PC-3 (cell line): ENCODE measurements at regions of chr10 and their contacts with region 1.

Region 1: GRCh38 chr10:29735596-29736318 is 101.0 kb upstream of the SVIL start:
- DNase-seq: peak; percentile 89
- ATAC-seq: peak; percentile 79
- H3K4me3 ChIP-seq: peak overlapping the region; percentile 81
- H3K27ac ChIP-seq: peak overlapping the region; percentile 69
- H3K4me1 ChIP-seq: peaks cover 13% of the 10 kb centered on the region; the same call in 1 of the 2 replicates
- H3K27me3 ChIP-seq: no peaks in the 10 kb centered on the region
- CTCF ChIP-seq: peak; percentile 71

Region 2: GRCh38 chr10:29535012-29535777 is 200.6 kb before region 1 on chr10:
- CTCF ChIA-PET with region 1: no interaction called
- POLR2A ChIA-PET with region 1: no interaction called
- intact Hi-C with region 1: loop called (anchors 2 kb)
- DNase-seq: peak; percentile 90
- ATAC-seq: peak; percentile 89
- H3K4me3 ChIP-seq: peak overlapping the region; percentile 43; the same call in 1 of the 2 replicates
- H3K27ac ChIP-seq: peak overlapping the region; percentile 96
- H3K4me1 ChIP-seq: peaks cover 43% of the 10 kb centered on the region
- H3K27me3 ChIP-seq: no peaks in the 10 kb centered on the region
- CTCF ChIP-seq: peak; percentile 90

Region 3: DNA sequence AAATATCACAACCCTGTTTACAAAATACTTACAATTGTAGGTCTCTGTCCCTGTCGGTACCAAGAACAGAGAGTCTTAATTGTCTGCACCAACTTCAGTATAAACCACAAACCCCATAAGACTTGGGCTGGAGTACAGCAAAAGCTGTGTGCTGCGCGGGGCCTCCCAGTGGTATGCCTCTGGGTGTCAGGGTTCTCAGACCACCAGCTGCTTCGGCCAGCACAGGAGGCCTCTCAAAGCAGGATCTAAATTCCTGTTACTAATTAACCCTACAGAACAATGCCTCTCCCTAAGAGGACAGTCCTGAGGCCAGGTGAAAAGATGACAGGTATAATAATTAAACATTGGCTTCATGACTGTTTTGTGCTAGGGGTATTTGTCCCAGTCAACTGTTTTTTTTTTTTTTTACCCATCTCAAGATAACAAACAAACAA is 100.0 kb before region 1 on chr10:
- CTCF ChIA-PET with region 1: no interaction called
- POLR2A ChIA-PET with region 1: interaction called, 20 read pairs
- intact Hi-C with region 1: loop called (anchors 5 kb)
- DNase-seq: no peak
- ATAC-seq: peak; percentile 25
- H3K4me3 ChIP-seq: peak overlapping the region; percentile 32; the same call in 1 of the 2 replicates
- H3K27ac ChIP-seq: peak overlapping the region; percentile 99
- H3K4me1 ChIP-seq: peaks cover 54% of the 10 kb centered on the region
- H3K27me3 ChIP-seq: no peaks in the 10 kb centered on the region
- CTCF ChIP-seq: no peak

Region 4: GRCh38 chr10:29646238-29646902 is 89.4 kb before region 1 on chr10:
- CTCF ChIA-PET with region 1: no interaction called
- POLR2A ChIA-PET with region 1: no interaction called
- intact Hi-C with region 1: no loop called
- DNase-seq: peak; percentile 57
- ATAC-seq: peak; percentile 65
- H3K4me3 ChIP-seq: no peak overlapping the region
- H3K27ac ChIP-seq: peak overlapping the region; percentile 60
- H3K4me1 ChIP-seq: peaks cover 37% of the 10 kb centered on the region
- H3K27me3 ChIP-seq: no peaks in the 10 kb centered on the region
- CTCF ChIP-seq: no peak

Region 5: GRCh38 chr10:29714096-29714874 is 21.5 kb before region 1 on chr10:
- CTCF ChIA-PET with region 1: no interaction called
- POLR2A ChIA-PET with region 1: no interaction called
- intact Hi-C with region 1: loop called (anchors 2 kb)
- DNase-seq: peak; percentile 80
- ATAC-seq: peak; percentile 84
- H3K4me3 ChIP-seq: no peak overlapping the region
- H3K27ac ChIP-seq: peak overlapping the region; percentile 64
- H3K4me1 ChIP-seq: peaks cover 36% of the 10 kb centered on the region
- H3K27me3 ChIP-seq: no peaks in the 10 kb centered on the region
- CTCF ChIP-seq: no peak

Region 6: DNA sequence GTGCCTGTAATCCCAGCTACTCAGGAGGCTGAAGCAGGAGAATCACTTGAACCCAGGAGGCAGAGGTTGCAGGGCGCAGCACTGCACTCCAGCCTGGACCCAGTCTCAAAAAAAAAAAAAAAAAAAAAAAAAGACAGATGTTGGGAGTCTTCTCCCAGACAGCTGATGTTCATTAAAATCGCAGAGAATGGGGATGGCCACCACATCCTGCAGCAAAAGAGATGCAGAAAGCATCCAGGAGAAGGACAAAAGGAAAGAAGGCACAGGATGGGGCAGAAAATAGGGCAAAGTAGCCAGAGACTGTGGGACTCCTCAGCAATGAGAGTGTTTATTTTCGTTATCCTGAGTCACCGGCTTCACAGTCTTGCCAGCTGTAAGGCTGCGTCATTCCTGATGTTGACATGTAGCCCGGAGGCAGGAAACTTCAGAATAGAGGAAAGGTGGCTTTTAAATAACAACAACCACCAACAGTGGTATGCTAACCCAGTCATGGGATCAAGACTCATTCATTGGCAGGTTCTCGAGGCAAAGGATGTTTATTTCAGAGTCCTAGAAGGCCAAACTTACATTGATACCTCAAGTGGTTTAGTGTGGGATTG is 48.5 kb after region 1 on chr10:
- CTCF ChIA-PET with region 1: no interaction called
- POLR2A ChIA-PET with region 1: no interaction called
- intact Hi-C with region 1: loop called (anchors 1 kb)
- DNase-seq: peak; percentile 98
- ATAC-seq: peak; percentile 97
- H3K4me3 ChIP-seq: no peak overlapping the region
- H3K27ac ChIP-seq: peak overlapping the region; percentile 90
- H3K4me1 ChIP-seq: peaks cover 15% of the 10 kb centered on the region
- H3K27me3 ChIP-seq: no peaks in the 10 kb centered on the region
- CTCF ChIP-seq: no peak

Region 7: DNA sequence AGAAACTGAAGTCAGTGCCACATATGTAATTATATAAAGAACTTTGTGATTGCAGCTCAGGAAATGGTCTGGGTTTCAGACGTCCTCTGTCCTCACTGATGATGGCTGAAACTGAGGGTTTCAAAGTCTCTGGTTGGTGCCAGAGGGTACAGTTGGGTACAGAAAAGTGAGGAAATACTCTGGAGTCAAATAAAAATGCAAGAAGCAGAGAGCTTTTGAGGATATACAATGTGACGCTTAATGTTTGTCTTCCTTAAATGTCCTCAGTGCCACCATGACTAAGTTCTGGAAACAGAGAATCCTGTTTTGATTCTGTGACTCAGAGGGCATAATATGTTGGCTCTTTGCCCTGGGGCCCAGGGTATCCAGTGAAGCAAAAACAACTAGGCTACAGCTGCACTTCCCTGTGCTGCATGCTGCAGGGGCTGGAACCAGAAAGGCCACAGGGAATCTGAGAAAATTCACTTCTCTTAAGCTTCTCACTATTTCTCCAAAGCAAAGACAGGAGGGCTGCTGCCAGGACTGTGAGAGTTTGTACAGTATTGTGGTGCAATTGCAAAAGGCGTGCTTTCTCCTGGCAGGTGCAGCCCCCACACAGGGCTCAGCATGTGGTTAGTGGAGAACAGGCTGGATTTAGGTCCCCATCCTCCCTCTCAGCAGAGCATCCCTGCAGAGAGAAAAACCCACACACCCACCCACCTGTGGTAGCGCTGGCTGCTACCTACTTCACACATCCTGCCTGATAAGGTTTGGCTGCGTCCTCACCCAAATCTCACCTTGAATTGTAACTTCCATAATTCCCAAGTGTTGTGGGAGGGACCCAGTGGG is 68.5 kb after region 1 on chr10:
- CTCF ChIA-PET with region 1: no interaction called
- POLR2A ChIA-PET with region 1: no interaction called
- intact Hi-C with region 1: loop called (anchors 5 kb)
- DNase-seq: peak; percentile 97
- ATAC-seq: peak; percentile 79
- H3K4me3 ChIP-seq: peak overlapping the region; percentile 49; the same call in 1 of the 2 replicates
- H3K27ac ChIP-seq: peak overlapping the region; percentile 100
- H3K4me1 ChIP-seq: peaks cover 50% of the 10 kb centered on the region
- H3K27me3 ChIP-seq: no peaks in the 10 kb centered on the region
- CTCF ChIP-seq: no peak

Region 8: GRCh38 chr10:29857843-29858701 is 122.3 kb after region 1 on chr10:
- CTCF ChIA-PET with region 1: no interaction called
- POLR2A ChIA-PET with region 1: no interaction called
- intact Hi-C with region 1: loop called (anchors 1 kb)
- DNase-seq: peak; percentile 81
- ATAC-seq: peak; percentile 57
- H3K4me3 ChIP-seq: peak overlapping the region; percentile 28; the same call in 1 of the 2 replicates
- H3K27ac ChIP-seq: peak overlapping the region; percentile 63
- H3K4me1 ChIP-seq: peaks cover 41% of the 10 kb centered on the region
- H3K27me3 ChIP-seq: no peaks in the 10 kb centered on the region
- CTCF ChIP-seq: peak; percentile 82

Region 9: GRCh38 chr10:30456266-30456665 is 720.5 kb after region 1 on chr10:
- CTCF ChIA-PET with region 1: no interaction called
- POLR2A ChIA-PET with region 1: no interaction called
- intact Hi-C with region 1: no loop called
- DNase-seq: no peak
- ATAC-seq: no peak
- H3K4me3 ChIP-seq: no peak overlapping the region
- H3K27ac ChIP-seq: no peak overlapping the region
- H3K4me1 ChIP-seq: no peaks in the 10 kb centered on the region
- H3K27me3 ChIP-seq: no peaks in the 10 kb centered on the region
- CTCF ChIP-seq: no peak